GM13976 (cell line): ENCODE measurements at regions of chr7 and their contacts with region 1.

Region 1: GRCh38 chr7:128462460-128462859 is 6.8 kb downstream of the HILPDA start:
- DNase-seq: no peak
- CTCF ChIP-seq: no peak

Region 2: GRCh38 chr7:127741764-127742375 is 720.6 kb before region 1 on chr7:
- in situ Hi-C with region 1: no loop called
- DNase-seq: no peak
- CTCF ChIP-seq: no peak

Region 3: DNA sequence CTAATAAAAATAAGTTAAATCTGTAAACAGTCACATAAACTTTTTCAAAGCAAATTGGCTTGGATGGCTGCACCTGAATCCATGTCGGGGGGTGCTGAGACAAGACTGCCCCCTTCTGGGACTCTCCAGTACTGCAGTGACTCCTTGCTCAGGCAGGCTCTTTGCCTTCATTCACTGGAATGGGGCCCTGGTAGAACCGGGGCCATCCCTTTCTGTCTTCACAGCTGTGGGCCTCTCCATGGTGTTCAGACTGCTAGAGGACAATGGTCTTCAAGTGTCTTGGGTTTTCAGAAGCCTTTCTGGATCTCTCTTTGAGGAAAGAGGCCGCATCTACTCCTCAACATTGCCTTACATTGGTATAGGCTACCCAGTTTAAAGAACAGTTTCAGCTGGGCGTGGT is 36.6 kb before region 1 on chr7:
- in situ Hi-C with region 1: loop called (anchors 5 kb)
- DNase-seq: peak; percentile 75
- CTCF ChIP-seq: peak; percentile 96